Mucosa of descending colon (tissue), 3 donors: ENCODE measurements at regions of chr16 and their contacts with region 1.

Region 1: GRCh38 chr16:10918294-10919002 is 23.8 kb downstream of the DEXI start:
- DNase-seq: peak; percentile 82 to 98 (median 83)
- ATAC-seq: peak; percentile 95
- H3K4me3 ChIP-seq: no peak overlapping the region
- H3K4me1 ChIP-seq: no peaks in the 10 kb centered on the region
- CTCF ChIP-seq: peak; percentile 90

Region 2: GRCh38 chr16:10743610-10744393 is 174.6 kb before region 1 on chr16 and contains the start of gene NUBP1:
- intact Hi-C with region 1: loop called in 1 of 2 experiments (anchors 5 kb)
- DNase-seq: peak; percentile 100
- ATAC-seq: peak; percentile 98
- H3K4me3 ChIP-seq: peak within 1 kb of the TSS; percentile 25
- H3K4me1 ChIP-seq: peaks cover 4% of the 10 kb centered on the region
- CTCF ChIP-seq: no peak
- total RNA-seq, gene NUBP1: 24.1 to 34.8 (median 24.6) TPM

Region 3: GRCh38 chr16:10957771-10958486 is 39.5 kb after region 1 on chr16:
- intact Hi-C with region 1: no loop called
- DNase-seq: no peak
- ATAC-seq: no peak
- H3K4me3 ChIP-seq: no peak overlapping the region
- H3K4me1 ChIP-seq: no peaks in the 10 kb centered on the region
- CTCF ChIP-seq: no peak